CD4-positive, alpha-beta memory T cell (primary cell): ENCODE measurements at regions of chr19 and their contacts with region 1.

Region 1: DNA sequence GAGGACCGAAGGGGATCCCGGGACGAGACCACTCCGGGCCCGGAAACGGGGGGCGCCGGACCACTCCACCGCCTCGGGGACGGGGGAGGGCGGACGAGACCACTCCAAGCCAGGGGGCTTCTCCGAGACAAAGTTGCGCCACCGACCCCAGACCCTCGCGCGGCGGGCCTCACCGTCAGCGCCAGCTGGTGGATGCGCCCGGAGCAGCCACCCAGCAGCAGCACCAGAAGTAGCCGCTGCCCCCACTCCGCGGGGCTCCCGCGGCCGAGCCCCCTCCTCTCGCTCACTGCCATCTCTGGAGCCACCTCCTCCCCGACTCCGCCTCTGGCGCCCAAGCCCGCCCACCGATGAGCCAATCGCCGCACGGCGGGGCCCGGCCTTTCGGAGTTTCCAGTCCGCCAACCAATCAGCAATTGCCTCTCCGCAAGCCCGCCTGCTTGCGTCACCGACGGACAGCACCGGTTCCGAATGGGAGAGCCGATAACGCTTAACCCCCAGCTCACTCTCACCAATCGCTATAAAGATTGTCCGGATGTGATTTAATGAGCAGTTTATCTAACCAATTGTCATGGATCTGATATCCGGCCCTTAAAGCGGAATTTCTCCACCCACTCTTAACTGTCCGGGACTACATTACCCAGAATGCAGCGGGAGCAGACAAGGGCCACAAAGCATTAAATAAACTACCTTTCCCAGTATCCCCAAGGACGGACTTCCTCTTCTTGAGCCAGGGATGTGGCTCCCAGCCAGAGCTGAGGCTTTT is at the start of gene GPR108:
- DNase-seq: peak; percentile 98 to 100 (median 99)
- H3K4me3 ChIP-seq: peak within 1 kb of the TSS; percentile 58 to 80
- H3K4me3 Mint-ChIP-seq: peak within 1 kb of the TSS; percentile 95 to 99 (median 97)
- H3K27ac ChIP-seq: peak within 1 kb of the TSS; percentile 94
- H3K27ac Mint-ChIP-seq: peak within 1 kb of the TSS; percentile 93 to 99 (median 98)
- H3K4me1 ChIP-seq: peaks cover 50% of the 10 kb centered on the region
- H3K4me1 Mint-ChIP-seq: peaks cover 17 to 52% (median 35%) of the 10 kb centered on the region in 4 donors
- H3K27me3 ChIP-seq: no peaks in the 10 kb centered on the region
- H3K27me3 Mint-ChIP-seq: no peaks in the 10 kb centered on the region
- total RNA-seq, gene GPR108: 75.6 to 85.3 TPM

Region 2: DNA sequence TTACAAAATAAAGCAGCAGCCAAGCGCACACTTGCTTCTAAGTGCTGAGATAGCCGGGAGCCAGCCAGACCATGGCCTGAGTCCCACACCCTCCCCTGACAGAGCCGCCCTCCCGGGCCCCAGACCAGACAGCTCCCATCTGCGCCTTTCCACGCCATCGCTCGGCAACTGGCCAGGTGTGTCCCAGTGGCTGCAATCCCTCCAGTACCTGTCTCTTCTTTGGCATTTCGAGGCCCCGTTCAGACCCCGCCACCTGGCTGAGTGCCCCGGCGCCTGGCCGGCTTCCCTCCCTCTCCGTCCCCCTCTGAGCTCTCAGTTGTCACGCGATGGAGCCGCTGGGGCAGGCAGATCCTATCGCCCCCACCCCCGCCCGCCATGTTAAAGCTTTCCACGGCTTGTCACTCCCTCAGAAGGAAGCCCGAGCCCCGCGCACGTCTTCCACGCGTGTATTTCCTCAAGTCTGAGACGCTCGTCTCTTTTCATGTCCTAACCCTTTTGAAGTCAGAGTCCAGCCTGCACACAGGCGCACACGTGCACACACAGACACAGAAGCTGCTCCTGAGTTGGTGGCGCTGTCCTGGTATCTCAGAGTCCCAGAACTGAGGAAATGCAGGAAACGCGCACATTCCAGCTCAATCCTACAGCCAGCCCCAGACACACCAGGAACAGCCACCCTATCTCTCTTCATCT is 465.6 kb before region 1 on chr19:
- CTCF ChIA-PET with region 1: no interaction called
- POLR2A ChIA-PET with region 1: no interaction called
- intact Hi-C with region 1: no loop called
- DNase-seq: no peak
- H3K4me3 ChIP-seq: no peak overlapping the region
- H3K4me3 Mint-ChIP-seq: no peak overlapping the region
- H3K27ac ChIP-seq: no peak overlapping the region
- H3K27ac Mint-ChIP-seq: peak overlapping the region in 3 of 7 donors; percentile 12 to 70 (median 48)
- H3K4me1 ChIP-seq: peaks cover 23% of the 10 kb centered on the region
- H3K4me1 Mint-ChIP-seq: peaks cover 19 to 73% (median 38%) of the 10 kb centered on the region in 4 donors
- H3K27me3 ChIP-seq: no peaks in the 10 kb centered on the region
- H3K27me3 Mint-ChIP-seq: no peaks in the 10 kb centered on the region

Region 3: DNA sequence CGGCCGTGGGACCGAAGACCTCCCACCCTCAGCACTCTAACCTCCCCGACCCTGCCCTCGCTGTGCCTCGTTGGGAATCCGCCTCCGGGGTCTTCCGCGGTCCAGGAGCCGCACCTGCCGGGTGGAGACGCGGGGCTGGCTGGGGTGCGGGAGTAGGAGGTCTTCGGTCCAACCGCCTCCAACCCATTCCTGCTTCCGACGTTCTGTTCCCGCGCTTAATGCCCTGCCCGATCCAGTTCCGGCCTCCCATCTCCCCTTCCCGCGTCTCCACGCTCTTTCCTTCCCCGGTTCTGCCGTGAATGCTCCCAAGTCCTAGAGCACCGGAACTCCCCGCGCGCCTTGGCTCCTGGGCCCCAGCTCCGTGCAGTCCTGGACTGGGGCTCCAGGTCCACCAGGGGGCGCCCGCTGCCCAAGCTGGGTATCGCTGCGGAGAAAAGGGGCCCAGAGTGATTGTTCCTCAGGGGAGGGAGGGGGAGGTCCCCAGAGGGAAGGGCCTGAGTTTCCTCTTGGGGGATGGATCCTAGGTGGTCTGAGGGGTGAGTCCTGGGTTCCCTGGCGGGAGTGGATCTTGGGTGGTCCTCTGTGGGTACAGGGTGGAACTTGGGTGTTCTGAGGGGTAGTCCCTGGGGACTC is 220.7 kb before region 1 on chr19:
- CTCF ChIA-PET with region 1: interaction called, 7 read pairs
- POLR2A ChIA-PET with region 1: no interaction called
- intact Hi-C with region 1: loop called (anchors 1 kb)
- DNase-seq: peak; percentile 80 to 89 (median 85)
- H3K4me3 ChIP-seq: peak overlapping the region; percentile 30 to 70
- H3K4me3 Mint-ChIP-seq: peak overlapping the region; percentile 93 to 98 (median 96)
- H3K27ac ChIP-seq: peak overlapping the region; percentile 45
- H3K27ac Mint-ChIP-seq: peak overlapping the region; percentile 42 to 96 (median 84)
- H3K4me1 ChIP-seq: peaks cover 27% of the 10 kb centered on the region
- H3K4me1 Mint-ChIP-seq: peaks cover 21 to 38% (median 27%) of the 10 kb centered on the region in 4 donors
- H3K27me3 ChIP-seq: no peaks in the 10 kb centered on the region
- H3K27me3 Mint-ChIP-seq: no peaks in the 10 kb centered on the region

Region 4: DNA sequence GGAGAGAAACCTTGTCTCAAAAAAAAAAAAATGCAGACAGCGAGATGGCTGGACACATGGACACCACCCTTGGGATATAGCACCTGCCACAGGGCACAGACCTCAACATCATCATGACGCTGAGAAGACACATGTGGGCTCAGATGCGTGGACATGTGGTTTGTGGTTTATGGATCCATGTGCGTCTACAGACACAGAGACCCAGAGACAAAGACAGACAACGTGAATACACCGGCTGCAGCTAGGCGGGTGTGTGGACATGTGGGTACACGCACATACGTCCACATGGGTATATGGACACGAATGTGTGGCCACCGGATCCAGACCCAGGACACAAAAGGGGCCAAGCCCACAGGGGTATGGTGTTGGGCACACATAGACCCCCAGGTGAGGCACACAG is 68.8 kb before region 1 on chr19:
- CTCF ChIA-PET with region 1: interaction called, 3 read pairs
- POLR2A ChIA-PET with region 1: interaction called, 22 read pairs
- intact Hi-C with region 1: no loop called
- DNase-seq: peak in 3 of 5 donors; percentile 33 to 73 (median 36)
- H3K4me3 ChIP-seq: peak overlapping the region; percentile 64 to 81
- H3K4me3 Mint-ChIP-seq: peak overlapping the region; percentile 97 to 100 (median 98)
- H3K27ac ChIP-seq: peak overlapping the region; percentile 71
- H3K27ac Mint-ChIP-seq: peak overlapping the region; percentile 94 to 99 (median 97)
- H3K4me1 ChIP-seq: peaks cover 50% of the 10 kb centered on the region
- H3K4me1 Mint-ChIP-seq: peaks cover 19 to 51% (median 37%) of the 10 kb centered on the region in 4 donors
- H3K27me3 ChIP-seq: no peaks in the 10 kb centered on the region
- H3K27me3 Mint-ChIP-seq: no peaks in the 10 kb centered on the region

Region 5: GRCh38 chr19:6767357-6768235 is 30.1 kb after region 1 on chr19 and contains the start of gene SH2D3A:
- CTCF ChIA-PET with region 1: interaction called, 46 read pairs
- POLR2A ChIA-PET with region 1: interaction called, 30 read pairs
- intact Hi-C with region 1: loop called (anchors 1 kb)
- DNase-seq: peak; percentile 96 to 99 (median 96)
- H3K4me3 ChIP-seq: peak within 1 kb of the TSS; percentile 63 to 80
- H3K4me3 Mint-ChIP-seq: peak within 1 kb of the TSS; percentile 91 to 98 (median 94)
- H3K27ac ChIP-seq: peak within 1 kb of the TSS; percentile 97
- H3K27ac Mint-ChIP-seq: peak within 1 kb of the TSS; percentile 89 to 99 (median 96)
- H3K4me1 ChIP-seq: peaks cover 54% of the 10 kb centered on the region
- H3K4me1 Mint-ChIP-seq: peaks cover 31 to 67% (median 44%) of the 10 kb centered on the region in 4 donors
- H3K27me3 ChIP-seq: no peaks in the 10 kb centered on the region
- H3K27me3 Mint-ChIP-seq: no peaks in the 10 kb centered on the region
- total RNA-seq, gene SH2D3A: 59.3 to 64.3 TPM

Region 6: GRCh38 chr19:6868351-6868750 is 130.9 kb after region 1 on chr19:
- CTCF ChIA-PET with region 1: interaction called, 184 read pairs
- POLR2A ChIA-PET with region 1: interaction called, 130 read pairs
- intact Hi-C with region 1: no loop called
- DNase-seq: no peak
- H3K4me3 ChIP-seq: no peak overlapping the region
- H3K4me3 Mint-ChIP-seq: no peak overlapping the region
- H3K27ac ChIP-seq: no peak overlapping the region
- H3K27ac Mint-ChIP-seq: peak overlapping the region in 1 of 7 donors; percentile 9
- H3K4me1 ChIP-seq: peaks cover 8% of the 10 kb centered on the region
- H3K4me1 Mint-ChIP-seq: peaks cover 8 to 20% (median 10%) of the 10 kb centered on the region in 4 donors
- H3K27me3 ChIP-seq: no peaks in the 10 kb centered on the region
- H3K27me3 Mint-ChIP-seq: no peaks in the 10 kb centered on the region

Region 7: DNA sequence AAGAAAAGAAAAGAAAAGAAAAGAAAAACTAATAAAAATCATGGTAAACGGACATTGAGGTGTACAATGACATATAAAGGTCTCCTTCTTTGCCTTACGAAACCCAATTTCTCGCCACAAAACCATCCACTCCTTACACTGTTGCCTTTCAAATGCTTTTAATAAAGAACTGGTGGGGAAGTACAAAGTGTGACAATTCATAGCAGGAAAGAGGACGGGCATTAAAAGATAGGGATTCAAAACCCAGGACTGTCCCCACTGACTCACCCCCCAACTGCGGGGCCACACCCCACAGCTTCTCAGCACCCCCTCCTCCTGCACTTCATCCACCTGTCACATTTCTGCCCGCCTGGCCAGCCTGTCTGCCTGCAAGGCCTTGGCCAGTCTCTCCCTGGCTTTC is 281.4 kb after region 1 on chr19:
- CTCF ChIA-PET with region 1: no interaction called
- POLR2A ChIA-PET with region 1: no interaction called
- intact Hi-C with region 1: no loop called
- DNase-seq: no peak
- H3K4me3 ChIP-seq: no peak overlapping the region
- H3K4me3 Mint-ChIP-seq: no peak overlapping the region
- H3K27ac ChIP-seq: no peak overlapping the region
- H3K27ac Mint-ChIP-seq: no peak overlapping the region
- H3K4me1 ChIP-seq: peaks cover 5% of the 10 kb centered on the region
- H3K4me1 Mint-ChIP-seq: peaks cover under 1 to 13% (median 5%) of the 10 kb centered on the region in 4 donors
- H3K27me3 ChIP-seq: no peaks in the 10 kb centered on the region
- H3K27me3 Mint-ChIP-seq: no peaks in the 10 kb centered on the region